ENCODE measurements at regions of chr19 and their contacts with region 1.

Region 1: GRCh38 chr19:12666265-12667048 is at the starts of genes MAN2B1 and WDR83:
- DNase-seq: peak; percentile 95
- H3K4me3 Mint-ChIP-seq: peak within 1 kb of the TSS; percentile 92
- H3K27ac Mint-ChIP-seq: peak within 1 kb of the TSS; percentile 98
- H3K4me1 Mint-ChIP-seq: peaks cover 41% of the 10 kb centered on the region
- H3K27me3 Mint-ChIP-seq: no peaks in the 10 kb centered on the region
- total RNA-seq, gene MAN2B1: 118 and 136 TPM in 2 replicates
- total RNA-seq, gene WDR83: 21.7 and 27.1 TPM in 2 replicates

Region 2: GRCh38 chr19:12551060-12551832 is 115.2 kb before region 1 on chr19 and contains the start of gene ZNF564:
- intact Hi-C with region 1: loop called (anchors 1 kb)
- DNase-seq: peak; percentile 98
- H3K4me3 Mint-ChIP-seq: peak within 1 kb of the TSS; percentile 95
- H3K27ac Mint-ChIP-seq: peak within 1 kb of the TSS; percentile 96
- H3K4me1 Mint-ChIP-seq: peaks cover 23% of the 10 kb centered on the region
- H3K27me3 Mint-ChIP-seq: no peaks in the 10 kb centered on the region
- total RNA-seq, gene ZNF564: 5.6 and 7.0 TPM in 2 replicates

Region 3: GRCh38 chr19:12610540-12611360 is 55.7 kb before region 1 on chr19 and contains the starts of genes ZNF490 and ZNF791:
- intact Hi-C with region 1: loop called (anchors 1 kb)
- DNase-seq: peak; percentile 99
- H3K4me3 Mint-ChIP-seq: peak within 1 kb of the TSS; percentile 100
- H3K27ac Mint-ChIP-seq: peak within 1 kb of the TSS; percentile 99
- H3K4me1 Mint-ChIP-seq: peaks cover 20% of the 10 kb centered on the region
- H3K27me3 Mint-ChIP-seq: no peaks in the 10 kb centered on the region
- total RNA-seq, gene ZNF490: 8.7 and 9.0 TPM in 2 replicates
- total RNA-seq, gene ZNF791: 22.3 and 26.6 TPM in 2 replicates

Region 4: DNA sequence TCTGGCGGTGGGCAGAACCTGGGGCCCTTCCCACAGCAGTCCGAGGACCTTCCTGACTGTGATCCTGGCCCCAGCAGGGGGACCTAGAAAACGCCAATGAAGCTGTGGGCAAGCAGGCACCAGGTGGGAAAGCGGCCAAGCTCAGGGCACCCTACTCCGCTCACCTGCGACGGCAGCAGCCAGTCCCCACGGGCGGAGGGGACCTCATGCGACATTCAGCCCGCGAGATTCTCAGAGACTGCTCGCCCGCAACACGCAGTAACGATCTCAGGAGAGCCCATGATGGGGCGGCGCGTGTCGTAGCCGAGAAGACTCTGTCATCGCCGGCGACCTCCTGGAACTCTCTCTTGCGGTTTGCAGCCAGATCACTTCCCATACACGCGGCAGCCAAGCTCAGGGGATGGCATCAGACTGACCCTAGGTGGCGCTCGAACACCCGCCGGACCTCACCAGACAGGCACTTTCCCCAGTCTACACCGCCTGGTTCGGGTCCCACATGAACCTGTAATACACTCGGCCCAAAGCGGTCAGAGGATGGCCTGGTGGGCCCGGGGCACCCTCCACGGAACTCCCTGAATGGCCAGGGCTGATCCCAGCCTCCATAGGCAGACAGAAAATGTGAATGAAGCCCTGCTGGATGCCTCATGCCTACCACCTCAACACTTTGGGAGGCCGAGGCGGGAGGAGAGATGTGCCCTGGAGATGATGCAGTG is 26.4 kb before region 1 on chr19:
- intact Hi-C with region 1: loop called (anchors 2 kb)
- DNase-seq: peak; percentile 94
- H3K4me3 Mint-ChIP-seq: peak overlapping the region; percentile 61
- H3K27ac Mint-ChIP-seq: peak overlapping the region; percentile 60
- H3K4me1 Mint-ChIP-seq: peaks cover 12% of the 10 kb centered on the region
- H3K27me3 Mint-ChIP-seq: no peaks in the 10 kb centered on the region

Region 5: DNA sequence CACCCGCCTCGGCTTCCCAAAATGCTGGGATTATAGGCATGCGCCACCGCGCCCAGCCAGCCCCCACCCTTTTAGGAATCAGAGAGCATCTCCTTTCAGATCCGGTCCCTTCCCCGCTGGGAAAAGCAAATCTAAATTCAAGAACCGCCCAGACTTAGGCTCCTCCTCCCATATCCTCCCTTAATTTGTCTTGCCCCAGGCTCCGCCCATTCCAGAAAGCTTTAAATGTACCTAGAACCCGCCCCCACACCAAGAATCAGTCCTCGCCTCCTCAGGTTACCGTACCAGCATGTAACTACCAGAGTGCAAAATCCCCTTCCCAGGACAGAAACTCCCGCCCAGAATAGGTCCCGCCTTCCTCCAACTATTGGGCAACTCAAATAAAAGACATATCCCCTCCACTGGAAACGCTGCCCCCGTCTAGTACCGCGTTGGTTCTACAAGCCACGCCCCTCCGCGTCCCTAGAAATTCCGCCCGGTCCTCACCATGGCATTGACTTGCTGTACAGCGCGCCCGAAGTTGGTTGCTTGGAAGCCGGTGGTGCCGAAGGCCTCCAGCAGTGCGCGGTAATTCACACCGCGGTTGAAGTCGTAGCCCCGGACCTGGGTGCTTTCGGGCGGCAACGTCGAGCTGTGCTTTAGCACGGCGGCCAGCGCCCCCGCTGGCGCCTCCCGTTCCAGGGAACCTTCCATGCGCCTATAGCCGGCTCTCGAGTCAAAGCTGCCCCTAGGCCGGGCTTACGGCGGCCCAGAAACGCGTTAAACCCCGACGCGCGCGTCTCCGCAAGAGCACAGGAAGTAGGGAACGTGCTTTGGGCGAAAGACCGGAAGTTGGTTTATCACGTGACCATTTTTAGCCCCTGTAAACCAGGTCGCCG is 14.9 kb after region 1 on chr19 and contains the start of gene DHPS:
- intact Hi-C with region 1: loop called (anchors 1 kb)
- DNase-seq: peak; percentile 97
- H3K4me3 Mint-ChIP-seq: peak within 1 kb of the TSS; percentile 94
- H3K27ac Mint-ChIP-seq: peak within 1 kb of the TSS; percentile 92
- H3K4me1 Mint-ChIP-seq: peaks cover 20% of the 10 kb centered on the region
- H3K27me3 Mint-ChIP-seq: no peaks in the 10 kb centered on the region
- total RNA-seq, gene DHPS: 138 and 155 TPM in 2 replicates

Region 6: GRCh38 chr19:12692960-12693359 is 26.5 kb after region 1 on chr19:
- intact Hi-C with region 1: no loop called
- DNase-seq: no peak
- H3K4me3 Mint-ChIP-seq: no peak overlapping the region
- H3K27ac Mint-ChIP-seq: no peak overlapping the region
- H3K4me1 Mint-ChIP-seq: peaks cover 5% of the 10 kb centered on the region
- H3K27me3 Mint-ChIP-seq: no peaks in the 10 kb centered on the region

Region 7: DNA sequence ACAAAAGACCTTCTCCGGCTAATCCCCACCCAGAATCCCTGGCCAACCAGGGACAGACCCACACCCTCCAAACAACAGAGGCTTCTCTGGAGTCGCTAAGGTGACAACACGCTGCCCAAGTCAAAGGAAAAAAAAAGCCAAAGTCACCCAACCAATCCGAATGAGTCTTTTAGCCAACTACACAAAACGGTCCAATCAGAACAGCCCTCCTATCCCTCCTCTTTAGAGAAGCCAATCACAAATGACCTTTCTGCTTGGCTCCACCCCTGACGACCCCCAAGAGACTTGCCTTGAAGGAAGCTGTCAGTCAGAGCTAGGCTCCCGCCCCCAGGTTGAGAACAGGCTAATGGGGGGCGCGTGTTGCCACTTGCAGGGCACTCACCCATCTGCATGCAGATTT is 36.6 kb after region 1 on chr19:
- intact Hi-C with region 1: no loop called
- DNase-seq: peak; percentile 68
- H3K4me3 Mint-ChIP-seq: no peak overlapping the region
- H3K27ac Mint-ChIP-seq: no peak overlapping the region
- H3K4me1 Mint-ChIP-seq: peaks cover 2% of the 10 kb centered on the region
- H3K27me3 Mint-ChIP-seq: no peaks in the 10 kb centered on the region

Measured in activated CD4-positive, alpha-beta T cell treated with anti-CD3 and anti-CD28 coated beads, Interleukin-2, amount 10 ng/mL, durations not matched to agents 24 days and 14 days (primary cell).